Activated CD4-positive, alpha-beta memory T cell treated with anti-CD3 and anti-CD28 coated beads, Interleukin-2, amount 10 ng/mL, durations not matched to agents 7 days and 5 days (primary cell): ENCODE measurements at regions of chr12 and their contacts with region 1.

Region 1: GRCh38 chr12:120649442-120650232 is 9.2 kb downstream of the CABP1 start:
- DNase-seq: no peak
- H3K4me3 Mint-ChIP-seq: no peak overlapping the region
- H3K27ac Mint-ChIP-seq: no peak overlapping the region
- H3K4me1 Mint-ChIP-seq: peaks cover 16% of the 10 kb centered on the region
- H3K27me3 Mint-ChIP-seq: peaks cover 52% of the 10 kb centered on the region

Region 2: DNA sequence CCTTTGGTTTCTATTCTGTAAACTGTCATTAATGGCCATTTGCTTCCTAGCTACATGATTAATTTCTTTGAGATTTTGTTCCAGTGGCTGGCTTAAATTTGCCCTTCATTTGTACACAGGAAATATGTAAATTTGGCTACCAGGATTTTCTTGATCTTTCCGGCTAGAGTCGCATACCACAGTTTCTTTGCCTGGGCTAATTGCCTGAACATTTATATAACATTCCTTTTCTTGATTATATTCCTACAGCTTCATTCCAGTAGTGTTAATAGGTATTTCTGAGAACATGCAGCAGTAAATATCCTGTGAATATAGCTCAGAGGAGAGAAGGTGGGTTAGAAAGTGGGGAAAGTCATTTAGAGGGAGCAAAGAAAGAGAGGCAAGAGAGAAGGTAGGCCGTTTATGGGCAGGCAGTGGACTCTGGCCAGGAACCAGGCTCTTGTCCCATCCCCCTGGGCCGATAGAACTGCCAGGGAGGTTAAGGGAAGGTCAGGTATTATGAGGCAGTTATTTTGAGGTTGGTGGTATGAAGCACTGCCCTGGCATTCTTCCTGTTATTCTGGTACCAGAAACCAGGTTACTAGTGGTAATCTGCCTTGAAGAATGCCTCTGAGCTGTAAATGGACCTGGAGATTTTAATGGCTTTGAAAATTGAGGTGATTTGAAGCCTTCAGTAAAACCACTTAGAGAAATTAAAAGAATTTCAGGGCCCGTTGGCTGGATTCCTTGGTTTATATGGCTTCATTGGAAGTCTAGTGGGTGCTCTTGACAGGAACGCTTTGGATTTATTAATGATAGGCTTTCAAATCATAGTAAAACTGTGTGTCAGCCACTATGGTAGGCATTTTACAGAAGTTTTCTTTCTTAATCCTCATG is 111.1 kb before region 1 on chr12:
- CTCF ChIA-PET with region 1: no interaction called
- POLR2A ChIA-PET with region 1: no interaction called
- DNase-seq: no peak
- H3K4me3 Mint-ChIP-seq: peak overlapping the region; percentile 88
- H3K27ac Mint-ChIP-seq: peak overlapping the region; percentile 93
- H3K4me1 Mint-ChIP-seq: peaks cover 55% of the 10 kb centered on the region
- H3K27me3 Mint-ChIP-seq: no peaks in the 10 kb centered on the region

Region 3: DNA sequence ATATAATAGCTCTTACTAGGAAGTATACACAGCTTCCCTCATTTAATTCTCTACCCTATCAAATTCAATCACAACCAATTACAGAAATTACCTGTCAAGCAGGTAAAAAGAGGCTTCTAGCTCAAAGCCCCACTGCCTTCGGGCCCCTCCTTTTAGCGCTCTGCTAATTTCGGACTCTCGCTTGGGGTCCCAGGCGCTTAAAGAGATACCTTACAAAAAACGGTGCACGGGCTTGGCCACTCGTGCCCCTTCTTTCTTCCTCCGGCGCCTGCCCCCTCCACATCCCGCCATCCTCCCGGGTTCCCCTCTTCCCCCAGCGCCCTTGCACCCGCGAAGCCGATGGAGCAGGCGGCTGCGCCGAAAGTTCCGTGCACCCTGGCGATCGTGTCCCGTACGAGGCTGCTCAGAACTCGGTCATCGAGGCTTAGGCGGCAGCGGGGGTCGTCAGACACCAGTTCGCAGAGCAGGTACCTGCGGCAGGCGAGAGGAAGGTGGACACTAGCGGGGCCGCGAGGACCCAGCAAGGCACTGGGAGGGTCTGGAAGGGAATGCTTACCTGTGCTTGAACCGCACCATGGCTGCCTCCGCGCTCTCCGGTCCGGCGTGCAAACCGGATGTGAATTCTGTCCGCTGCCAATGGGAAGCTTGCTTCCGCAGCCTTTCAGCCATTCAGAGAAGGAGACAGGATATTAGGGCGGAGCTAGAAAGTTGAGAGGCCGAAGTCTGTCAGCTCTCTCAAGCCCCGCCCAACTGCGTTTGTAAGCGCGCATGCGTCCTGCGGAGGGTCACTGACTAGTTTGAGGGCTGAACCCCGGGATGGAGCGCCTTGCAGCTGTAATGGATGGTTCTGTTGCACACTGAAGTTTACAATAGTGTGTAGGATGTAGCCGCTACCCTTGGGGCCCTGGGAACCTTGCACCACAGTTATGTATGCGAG is 68.6 kb before region 1 on chr12 and contains the start of gene POP5:
- CTCF ChIA-PET with region 1: interaction called, 79 read pairs
- POLR2A ChIA-PET with region 1: interaction called, 10 read pairs
- DNase-seq: peak; percentile 95
- H3K4me3 Mint-ChIP-seq: peak within 1 kb of the TSS; percentile 94
- H3K27ac Mint-ChIP-seq: peak within 1 kb of the TSS; percentile 78
- H3K4me1 Mint-ChIP-seq: peaks cover 42% of the 10 kb centered on the region
- H3K27me3 Mint-ChIP-seq: peaks cover 13% of the 10 kb centered on the region
- total RNA-seq, gene POP5: 37.6 to 38.8 TPM

Region 4: DNA sequence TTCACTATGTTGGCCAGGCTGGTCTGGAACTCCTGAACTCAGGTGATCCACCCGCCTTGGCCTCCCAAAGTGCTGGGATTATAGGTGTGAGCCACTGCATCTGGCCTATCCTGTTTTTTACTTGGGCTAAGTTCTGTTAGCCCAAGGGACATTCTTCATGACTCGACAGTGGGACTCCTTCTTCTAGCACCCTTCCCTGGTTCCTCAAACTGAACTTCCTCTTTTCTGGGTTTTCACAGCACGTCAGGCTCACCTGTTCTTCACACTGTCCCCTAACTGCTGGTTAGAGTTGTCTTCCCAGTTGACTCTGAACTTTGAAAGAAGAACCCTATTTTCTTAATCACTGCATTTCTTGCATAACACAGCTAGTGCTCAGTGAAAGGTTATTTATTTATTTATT is 13.2 kb after region 1 on chr12:
- CTCF ChIA-PET with region 1: interaction called, 35 read pairs
- POLR2A ChIA-PET with region 1: no interaction called
- DNase-seq: no peak
- H3K4me3 Mint-ChIP-seq: no peak overlapping the region
- H3K27ac Mint-ChIP-seq: no peak overlapping the region
- H3K4me1 Mint-ChIP-seq: no peaks in the 10 kb centered on the region
- H3K27me3 Mint-ChIP-seq: peaks cover 5% of the 10 kb centered on the region

Region 5: DNA sequence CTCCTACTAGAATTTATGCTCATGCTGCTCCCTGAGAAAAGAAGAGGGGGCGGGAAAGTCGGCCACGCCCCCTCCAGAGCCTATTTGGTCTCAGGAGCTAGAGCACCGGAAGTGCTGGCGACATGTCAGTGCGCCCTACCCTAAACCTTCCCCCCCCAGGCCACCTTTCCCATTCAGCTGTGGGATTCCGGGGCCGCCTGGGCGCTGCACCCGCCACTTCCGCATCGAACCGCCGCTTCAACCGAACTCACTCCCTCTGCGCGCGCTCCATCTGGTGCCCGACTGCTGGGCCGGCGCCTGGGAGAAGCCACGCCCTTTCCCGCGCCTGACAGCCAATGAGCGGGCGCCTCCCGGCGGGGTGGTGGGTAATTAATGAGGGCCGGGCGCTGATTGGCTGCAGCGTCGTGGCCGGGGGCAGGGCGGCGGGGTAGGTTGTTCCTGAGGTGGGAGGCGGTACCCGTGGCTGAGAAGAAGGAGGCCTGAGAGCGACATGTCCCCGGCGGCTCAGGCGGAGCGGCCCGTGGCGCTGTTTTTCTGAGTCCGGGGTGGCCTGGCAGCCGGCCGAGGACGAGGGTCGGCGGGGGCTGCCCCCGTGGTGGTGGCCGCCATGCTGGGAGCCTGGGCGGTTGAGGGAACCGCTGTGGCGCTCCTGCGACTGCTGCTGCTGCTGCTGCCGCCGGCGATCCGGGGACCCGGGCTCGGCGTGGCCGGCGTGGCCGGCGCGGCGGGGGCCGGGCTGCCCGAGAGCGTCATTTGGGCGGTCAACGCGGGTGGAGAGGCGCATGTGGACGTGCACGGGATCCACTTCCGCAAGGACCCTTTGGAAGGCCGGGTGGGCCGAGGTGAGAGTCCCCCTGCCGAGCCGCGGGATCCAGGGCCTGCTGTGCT is 37.3 kb after region 1 on chr12 and contains the start of gene MLEC:
- CTCF ChIA-PET with region 1: interaction called, 91 read pairs
- POLR2A ChIA-PET with region 1: interaction called, 4 read pairs
- DNase-seq: peak; percentile 100
- H3K4me3 Mint-ChIP-seq: peak within 1 kb of the TSS; percentile 87
- H3K27ac Mint-ChIP-seq: peak within 1 kb of the TSS; percentile 87
- H3K4me1 Mint-ChIP-seq: peaks cover 63% of the 10 kb centered on the region
- H3K27me3 Mint-ChIP-seq: no peaks in the 10 kb centered on the region
- total RNA-seq, gene MLEC: 81.1 to 97.8 TPM

Region 6: DNA sequence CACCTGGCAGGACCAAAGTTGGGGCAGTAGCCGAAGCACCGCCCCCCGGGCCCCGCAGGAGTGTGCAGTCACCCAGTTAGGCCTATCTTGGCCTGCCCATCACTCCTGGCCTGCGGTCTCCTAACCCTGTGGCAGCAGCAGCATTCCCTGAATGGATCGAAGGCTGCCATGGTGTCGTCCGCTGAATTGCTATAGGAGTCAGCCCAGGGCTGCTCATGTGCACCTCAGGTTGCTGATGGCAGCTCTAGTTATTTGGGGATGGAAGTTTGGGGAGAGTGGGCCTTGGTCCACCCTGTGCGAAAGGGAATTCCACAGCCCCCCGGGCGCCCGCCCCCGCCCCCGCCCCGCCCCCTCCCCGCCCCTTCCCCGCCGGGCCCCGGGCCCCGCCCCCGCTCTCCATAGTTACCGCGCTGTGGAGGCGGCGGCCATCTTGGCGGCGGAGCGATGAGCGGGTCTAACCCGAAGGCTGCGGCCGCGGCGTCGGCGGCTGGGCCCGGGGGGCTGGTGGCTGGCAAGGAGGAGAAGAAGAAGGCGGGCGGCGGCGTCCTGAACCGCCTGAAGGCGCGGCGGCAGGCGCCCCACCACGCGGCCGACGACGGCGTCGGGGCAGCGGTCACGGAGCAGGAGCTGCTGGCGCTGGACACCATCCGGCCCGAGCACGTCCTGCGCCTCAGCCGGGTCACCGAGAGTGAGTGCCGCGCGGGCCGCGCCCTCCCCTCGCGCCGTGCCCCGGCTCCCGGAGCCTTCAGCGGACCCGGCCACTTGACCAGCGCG is 60.6 kb after region 1 on chr12 and contains the start of gene UNC119B:
- CTCF ChIA-PET with region 1: interaction called, 57 read pairs
- POLR2A ChIA-PET with region 1: interaction called, 4 read pairs
- DNase-seq: peak; percentile 76
- H3K4me3 Mint-ChIP-seq: peak within 1 kb of the TSS; percentile 84
- H3K27ac Mint-ChIP-seq: peak within 1 kb of the TSS; percentile 65
- H3K4me1 Mint-ChIP-seq: peaks cover 34% of the 10 kb centered on the region
- H3K27me3 Mint-ChIP-seq: no peaks in the 10 kb centered on the region
- total RNA-seq, gene UNC119B: 22.4 to 23.6 TPM